Naive thymus-derived CD4-positive, alpha-beta T cell (primary cell): ENCODE measurements at regions of chr6 and their contacts with region 1.

Region 1: DNA sequence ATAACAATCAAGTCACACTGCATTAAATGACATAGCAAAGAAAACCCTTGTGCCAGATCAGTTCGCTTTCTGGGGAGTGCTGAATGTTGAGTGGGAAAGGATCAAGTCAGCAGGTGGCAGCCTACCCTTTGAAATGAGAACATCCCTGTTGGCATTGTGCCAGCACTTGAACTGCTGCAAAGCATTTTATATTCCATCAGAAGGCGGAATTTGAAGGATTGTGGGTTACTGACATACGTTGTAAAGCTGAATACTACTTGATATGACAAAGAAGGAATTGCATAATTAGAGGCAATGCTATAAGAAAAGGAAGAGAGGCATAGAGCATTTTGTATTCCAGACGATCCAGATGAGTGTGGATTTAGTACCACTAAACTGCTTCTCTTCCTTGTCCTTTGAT is 26.5 kb downstream of the BCKDHB start:
- DNase-seq: peak in 6 of 9 donors; percentile 9 to 30 (median 17)
- ATAC-seq: no peak
- H3K4me3 ChIP-seq: no peak overlapping the region
- H3K4me3 Mint-ChIP-seq: no peak overlapping the region
- H3K27ac ChIP-seq: no peak overlapping the region
- H3K27ac Mint-ChIP-seq: no peak overlapping the region
- H3K4me1 ChIP-seq: no peaks in the 10 kb centered on the region
- H3K4me1 Mint-ChIP-seq: peaks cover 0 to 3% (median 0%) of the 10 kb centered on the region in 7 donors
- H3K27me3 ChIP-seq: no peaks in the 10 kb centered on the region
- H3K27me3 Mint-ChIP-seq: no peaks in the 10 kb centered on the region

Region 2: DNA sequence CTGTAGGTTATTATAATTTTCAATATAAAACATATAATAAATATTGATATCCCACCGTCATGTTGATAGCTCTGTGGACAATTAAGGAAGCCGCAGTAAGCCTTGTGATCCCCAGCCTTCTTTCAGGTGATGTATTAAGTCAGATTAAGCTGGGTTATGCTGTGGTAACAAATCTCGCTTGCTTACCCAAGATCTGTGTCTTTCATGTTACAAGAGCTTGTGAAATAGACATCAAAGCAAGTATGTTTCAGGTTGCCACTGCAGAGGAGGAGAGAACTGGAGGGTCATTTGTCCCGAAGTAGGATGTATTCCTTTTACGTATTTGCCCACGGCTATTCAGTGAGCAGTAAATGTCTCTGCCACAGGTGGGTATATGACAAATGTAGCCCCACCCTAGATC is 44.4 kb before region 1 on chr6:
- CTCF ChIA-PET with region 1: no interaction called
- POLR2A ChIA-PET with region 1: no interaction called
- intact Hi-C with region 1: no loop called
- DNase-seq: no peak
- ATAC-seq: no peak
- H3K4me3 ChIP-seq: no peak overlapping the region
- H3K4me3 Mint-ChIP-seq: no peak overlapping the region
- H3K27ac ChIP-seq: no peak overlapping the region
- H3K27ac Mint-ChIP-seq: no peak overlapping the region
- H3K4me1 ChIP-seq: no peaks in the 10 kb centered on the region
- H3K4me1 Mint-ChIP-seq: no peaks in the 10 kb centered on the region
- H3K27me3 ChIP-seq: no peaks in the 10 kb centered on the region
- H3K27me3 Mint-ChIP-seq: peaks cover 7 to 35% (median 11%) of the 10 kb centered on the region in 5 donors

Region 3: DNA sequence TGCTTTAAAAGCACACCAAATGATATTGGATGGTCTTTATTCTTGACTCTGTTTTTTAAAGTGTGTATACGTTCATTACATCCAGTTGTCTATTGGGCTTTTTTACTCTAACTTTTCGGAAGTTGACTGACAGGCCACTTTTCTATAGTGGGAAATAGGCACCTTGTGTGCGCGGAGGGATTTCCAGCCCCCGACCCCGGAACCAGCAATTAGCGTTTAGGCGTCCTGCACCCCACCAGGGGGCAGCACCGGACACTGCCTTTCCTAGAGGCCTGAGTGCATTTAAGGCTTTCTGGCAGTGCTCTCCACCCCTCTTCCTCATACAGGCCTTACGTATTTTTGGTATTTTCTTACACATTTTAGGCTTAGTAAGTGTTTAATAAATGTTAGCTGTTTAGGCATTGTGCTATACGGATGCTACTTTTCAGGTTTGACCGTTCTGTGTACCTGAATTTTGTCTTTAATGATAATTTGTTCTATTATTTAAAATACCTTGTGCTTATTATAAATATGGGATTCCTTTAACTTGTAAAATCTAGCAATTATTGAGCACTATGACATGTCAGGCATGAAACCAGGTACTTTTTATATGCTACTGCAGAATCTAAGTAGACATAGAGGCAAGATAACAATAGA is 205.3 kb after region 1 on chr6:
- CTCF ChIA-PET with region 1: no interaction called
- POLR2A ChIA-PET with region 1: no interaction called
- intact Hi-C with region 1: loop called in 1 of 2 experiments (anchors 10 kb)
- DNase-seq: peak; percentile 16 to 72 (median 55)
- ATAC-seq: peak; percentile 84
- H3K4me3 ChIP-seq: no peak overlapping the region
- H3K4me3 Mint-ChIP-seq: no peak overlapping the region
- H3K27ac ChIP-seq: no peak overlapping the region
- H3K27ac Mint-ChIP-seq: no peak overlapping the region
- H3K4me1 ChIP-seq: no peaks in the 10 kb centered on the region
- H3K4me1 Mint-ChIP-seq: peaks cover 0 to 6% (median 0%) of the 10 kb centered on the region in 7 donors
- H3K27me3 ChIP-seq: no peaks in the 10 kb centered on the region
- H3K27me3 Mint-ChIP-seq: no peaks in the 10 kb centered on the region

Region 4: GRCh38 chr6:82040405-82041221 is 1907.6 kb after region 1 on chr6:
- CTCF ChIA-PET with region 1: no interaction called
- POLR2A ChIA-PET with region 1: no interaction called
- intact Hi-C with region 1: loop called in 1 of 2 experiments (anchors 5 kb)
- DNase-seq: no peak
- ATAC-seq: peak; percentile 38
- H3K4me3 ChIP-seq: no peak overlapping the region
- H3K4me3 Mint-ChIP-seq: no peak overlapping the region
- H3K27ac ChIP-seq: no peak overlapping the region
- H3K27ac Mint-ChIP-seq: no peak overlapping the region
- H3K4me1 ChIP-seq: no peaks in the 10 kb centered on the region
- H3K4me1 Mint-ChIP-seq: no peaks in the 10 kb centered on the region
- H3K27me3 ChIP-seq: no peaks in the 10 kb centered on the region
- H3K27me3 Mint-ChIP-seq: peaks cover 0 to 13% (median 4%) of the 10 kb centered on the region in 5 donors